Dorsolateral prefrontal cortex (tissue), 120 donors: ENCODE measurements at regions of chr1 and their contacts with region 1.

Region 1: GRCh38 chr1:243413431-243414151 is 157.8 kb downstream of the SDCCAG8 start:
- DNase-seq: no peak
- H3K4me3 ChIP-seq: no peak overlapping the region
- H3K27ac ChIP-seq: peak overlapping the region in 1 of 59 donors; percentile 87
- H3K27me3 ChIP-seq: no peaks in the 10 kb centered on the region
- CTCF ChIP-seq: no peak

Region 2: DNA sequence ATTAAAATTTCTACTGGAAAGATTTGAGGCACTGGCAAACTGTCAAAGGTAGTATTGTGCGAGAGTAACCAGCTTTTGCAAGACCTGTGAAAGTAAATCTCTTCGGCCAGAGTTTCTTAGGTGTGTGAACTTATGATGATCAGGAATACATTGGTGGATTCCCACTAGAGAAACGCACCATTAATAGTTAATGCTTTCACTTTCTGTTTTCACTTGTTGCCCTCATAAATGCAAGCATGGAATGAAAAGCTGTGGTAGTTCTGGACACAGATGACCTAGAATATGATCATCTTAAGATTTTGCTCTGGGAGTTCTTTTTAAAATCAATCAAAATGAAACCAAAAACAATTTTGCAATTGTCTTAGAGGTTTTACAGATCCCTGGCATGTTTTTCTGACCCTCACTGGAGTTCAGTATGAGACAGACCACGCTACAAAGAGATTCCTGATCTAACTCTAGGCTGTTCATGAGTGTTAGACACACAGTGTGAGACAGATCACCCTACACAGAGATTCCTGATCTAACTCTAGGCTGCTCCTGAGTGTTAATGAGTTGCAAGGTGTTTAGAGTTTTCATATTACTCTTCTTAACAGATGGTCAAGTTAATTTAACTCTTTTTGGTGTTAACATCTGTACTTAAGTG is 59.0 kb before region 1 on chr1:
- intact Hi-C with region 1: loop called in 1 of 2 experiments (anchors 10 kb)
- DNase-seq: no peak
- H3K4me3 ChIP-seq: peak overlapping the region in 53 of 59 donors; percentile 11 to 58 (median 36)
- H3K27ac ChIP-seq: peak overlapping the region in 28 of 59 donors; percentile 1 to 57 (median 20)
- H3K27me3 ChIP-seq: no peaks in the 10 kb centered on the region
- CTCF ChIP-seq: no peak

Region 3: DNA sequence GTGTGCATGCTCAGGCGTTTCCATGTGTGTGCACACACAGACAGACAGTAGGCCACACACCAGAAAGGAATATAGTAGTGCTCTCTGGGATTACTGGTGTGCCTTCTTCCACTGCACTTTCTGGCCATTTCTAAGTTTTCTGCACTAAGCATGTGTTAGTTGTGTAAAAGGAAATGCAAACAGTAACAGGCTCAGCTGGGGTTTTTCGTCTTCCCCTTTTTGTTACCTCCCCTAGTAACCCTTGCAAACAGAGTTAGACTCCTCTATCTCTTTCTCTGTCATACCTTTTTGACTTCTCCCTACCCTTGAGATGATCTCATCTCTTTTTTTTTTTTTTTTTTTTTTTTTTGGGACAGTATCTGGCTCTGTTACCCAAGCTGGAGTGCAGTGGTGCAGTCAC is 38.5 kb after region 1 on chr1:
- intact Hi-C with region 1: loop called in 1 of 2 experiments (anchors 5 kb)
- DNase-seq: no peak
- H3K4me3 ChIP-seq: no peak overlapping the region
- H3K27ac ChIP-seq: peak overlapping the region in 17 of 59 donors; percentile 7 to 55 (median 32)
- H3K27me3 ChIP-seq: no peaks in the 10 kb centered on the region
- CTCF ChIP-seq: no peak

Region 4: DNA sequence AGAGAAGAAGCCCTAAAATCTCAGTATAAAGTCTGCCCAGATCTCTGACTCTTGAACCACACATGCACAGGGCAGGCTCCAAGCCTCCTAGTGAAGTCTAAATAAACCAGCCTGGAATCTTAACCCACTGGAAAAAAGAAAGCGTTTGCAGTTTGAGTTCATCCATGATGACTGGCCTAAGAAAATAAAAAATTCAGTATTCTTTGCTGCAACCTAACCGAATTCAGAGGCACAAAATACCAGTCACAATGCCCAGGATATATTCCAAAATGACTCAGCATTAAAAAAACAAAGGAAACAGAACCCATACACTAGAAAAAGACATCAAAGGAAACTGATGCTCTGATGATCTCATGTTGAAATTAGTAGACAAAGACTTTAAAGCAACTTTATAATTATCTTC is 111.5 kb after region 1 on chr1:
- intact Hi-C with region 1: no loop called
- DNase-seq: no peak
- H3K4me3 ChIP-seq: no peak overlapping the region
- H3K27ac ChIP-seq: peak overlapping the region in 56 of 59 donors; percentile 1 to 85 (median 64)
- H3K27me3 ChIP-seq: no peaks in the 10 kb centered on the region
- CTCF ChIP-seq: no peak